ENCODE measurements at regions of chr13 and their contacts with region 1.

Region 1: GRCh38 chr13:75326173-75327134 is 155.5 kb downstream of the TBC1D4 start:
- DNase-seq: peak; percentile 79
- ATAC-seq: peak; percentile 87
- H3K4me3 Mint-ChIP-seq: peak overlapping the region; percentile 88
- H3K27ac Mint-ChIP-seq: peak overlapping the region; percentile 98
- H3K4me1 Mint-ChIP-seq: peaks cover 35% of the 10 kb centered on the region
- H3K27me3 Mint-ChIP-seq: no peaks in the 10 kb centered on the region

Region 2: GRCh38 chr13:75299913-75300862 is 26.3 kb before region 1 on chr13:
- CTCF ChIA-PET with region 1: interaction called, 4 read pairs
- POLR2A ChIA-PET with region 1: interaction called, 5 read pairs
- intact Hi-C with region 1: loop called in 1 of 2 experiments (anchors 1 kb)
- DNase-seq: no peak
- ATAC-seq: peak; percentile 86
- H3K4me3 Mint-ChIP-seq: no peak overlapping the region
- H3K27ac Mint-ChIP-seq: peak overlapping the region; percentile 70
- H3K4me1 Mint-ChIP-seq: peaks cover 56% of the 10 kb centered on the region
- H3K27me3 Mint-ChIP-seq: no peaks in the 10 kb centered on the region

Region 3: DNA sequence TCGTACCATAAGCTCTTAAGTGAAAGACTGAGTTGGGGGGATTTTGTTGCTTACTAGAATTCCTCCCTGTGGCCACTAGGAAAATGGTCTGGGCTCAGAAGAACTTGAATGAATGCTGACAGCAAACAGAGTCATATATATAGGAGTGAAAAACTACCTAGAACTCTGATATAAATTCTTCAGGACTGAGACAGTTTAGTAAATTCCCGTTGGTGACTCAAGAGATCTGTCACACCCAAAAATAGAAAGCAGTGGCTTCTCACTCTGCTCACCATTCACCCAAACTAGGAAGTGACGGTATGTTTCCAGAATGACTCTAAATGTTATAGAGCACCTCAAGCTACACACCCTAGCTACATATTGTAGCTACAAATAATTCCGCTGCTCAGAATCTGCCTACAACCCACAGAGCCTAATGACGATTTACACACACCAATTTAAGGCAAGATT is 39.3 kb after region 1 on chr13:
- CTCF ChIA-PET with region 1: interaction called, 25 read pairs
- POLR2A ChIA-PET with region 1: interaction called, 5 read pairs
- intact Hi-C with region 1: loop called (anchors 1 kb)
- DNase-seq: peak; percentile 41
- ATAC-seq: peak; percentile 93
- H3K4me3 Mint-ChIP-seq: peak overlapping the region; percentile 24
- H3K27ac Mint-ChIP-seq: peak overlapping the region; percentile 79
- H3K4me1 Mint-ChIP-seq: peaks cover 44% of the 10 kb centered on the region
- H3K27me3 Mint-ChIP-seq: no peaks in the 10 kb centered on the region

Region 4: DNA sequence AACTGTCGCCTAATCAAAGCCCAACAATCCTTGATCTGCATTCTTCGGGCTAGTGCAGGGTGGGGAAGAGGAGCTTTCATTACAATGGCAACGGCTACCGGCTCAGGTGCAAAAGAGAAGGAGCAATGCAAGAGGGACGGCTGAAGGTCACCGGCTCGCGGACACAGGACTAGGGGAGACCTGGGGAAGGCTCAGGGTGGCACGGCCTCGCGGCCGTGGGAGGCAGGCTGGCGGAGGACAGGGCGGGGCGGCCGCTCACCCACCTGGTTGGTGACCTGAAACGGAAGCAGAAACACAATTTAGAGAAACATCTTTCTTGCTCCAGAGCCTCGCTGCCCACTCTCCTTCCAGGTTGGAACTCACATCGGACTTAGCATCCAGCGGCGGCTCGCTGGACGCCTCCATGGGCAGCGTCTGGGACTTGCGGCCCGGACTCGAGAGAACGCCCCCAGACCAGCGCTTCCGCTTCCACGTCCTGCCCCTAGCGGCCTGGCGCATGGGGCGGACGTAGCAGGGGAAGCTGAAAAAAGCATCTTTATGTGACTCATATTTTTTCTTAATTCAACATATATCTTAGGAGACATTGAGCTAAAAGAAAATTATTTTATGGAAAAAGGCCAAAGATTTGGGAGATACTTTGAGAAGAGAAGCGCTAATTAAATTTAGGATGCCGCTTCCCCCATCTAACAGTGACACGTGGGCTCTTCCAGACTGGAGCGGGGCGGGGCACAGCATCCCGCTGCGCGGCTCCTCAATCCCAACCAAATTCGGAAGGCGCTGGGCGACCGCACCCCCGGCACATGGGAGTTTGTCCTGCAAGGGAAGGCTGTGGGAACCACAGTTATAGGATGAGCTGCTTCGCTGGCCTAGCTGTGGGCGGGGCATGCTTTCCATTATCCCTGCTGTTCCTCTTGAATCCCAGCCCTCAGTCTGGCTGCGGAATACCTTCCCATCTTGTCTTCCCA is 211.2 kb after region 1 on chr13 and contains the start of gene COMMD6:
- CTCF ChIA-PET with region 1: no interaction called
- POLR2A ChIA-PET with region 1: no interaction called
- intact Hi-C with region 1: loop called (anchors 2 to 5 kb)
- DNase-seq: peak; percentile 89
- ATAC-seq: peak; percentile 96
- H3K4me3 Mint-ChIP-seq: peak within 1 kb of the TSS; percentile 100
- H3K27ac Mint-ChIP-seq: peak within 1 kb of the TSS; percentile 96
- H3K4me1 Mint-ChIP-seq: peaks cover 46% of the 10 kb centered on the region
- H3K27me3 Mint-ChIP-seq: no peaks in the 10 kb centered on the region
- total RNA-seq, gene COMMD6: 103 to 121 TPM

Region 5: DNA sequence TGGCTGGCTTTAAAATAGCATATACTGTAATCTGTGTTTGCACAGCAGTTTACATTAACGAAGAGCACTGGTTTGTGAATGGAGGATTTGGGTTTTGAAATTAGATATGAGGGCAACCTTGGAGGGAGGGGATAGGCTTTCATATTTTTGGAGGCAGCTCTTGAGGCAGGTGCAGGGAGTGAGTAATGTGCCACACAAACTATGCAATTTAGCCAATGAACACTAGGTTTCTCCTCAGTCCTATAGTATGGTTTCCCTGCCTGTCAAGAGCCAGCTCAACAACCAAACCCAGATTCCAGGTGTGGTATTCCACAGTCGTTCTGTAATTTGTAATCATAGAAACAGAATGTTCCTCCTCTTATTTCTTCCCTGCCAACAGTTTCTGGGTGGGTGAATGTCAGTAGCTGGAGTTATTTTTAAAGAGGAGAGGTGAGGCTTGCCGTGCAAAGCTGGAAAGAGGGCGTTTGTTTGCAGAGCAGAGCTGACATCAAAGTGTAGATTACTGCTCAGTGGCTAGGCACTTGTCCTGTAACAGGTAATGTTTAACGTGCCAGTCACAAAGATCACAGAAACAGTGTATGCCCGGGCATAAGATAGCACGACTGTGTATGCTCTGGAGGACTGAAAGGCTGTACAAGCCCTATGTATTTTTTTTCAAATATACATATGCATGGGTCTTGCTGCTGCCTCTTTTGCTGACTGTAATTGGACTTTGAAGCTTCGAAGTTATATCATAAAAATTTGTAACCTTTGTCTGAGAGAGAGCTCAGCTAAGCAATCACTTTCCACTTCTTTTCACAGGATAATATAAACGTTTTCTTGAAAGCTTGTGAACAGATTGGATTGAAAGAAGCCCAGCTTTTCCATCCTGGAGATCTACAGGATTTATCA is 433.9 kb after region 1 on chr13:
- CTCF ChIA-PET with region 1: no interaction called
- POLR2A ChIA-PET with region 1: no interaction called
- intact Hi-C with region 1: loop called in 1 of 2 experiments (anchors 5 kb)
- DNase-seq: peak; percentile 16
- ATAC-seq: peak; percentile 74
- H3K4me3 Mint-ChIP-seq: peak overlapping the region; percentile 60
- H3K27ac Mint-ChIP-seq: peak overlapping the region; percentile 77
- H3K4me1 Mint-ChIP-seq: peaks cover 71% of the 10 kb centered on the region
- H3K27me3 Mint-ChIP-seq: no peaks in the 10 kb centered on the region